IMR-90 (cell line): ENCODE measurements at regions of chr9 and their contacts with region 1.

Region 1: GRCh38 chr9:22469928-22470544 is 23.4 kb downstream of the DMRTA1 start:
- DNase-seq: peak; percentile 13
- ATAC-seq: peak; percentile 49; the same call in 1 of the 2 replicates
- H3K4me3 ChIP-seq: no peak overlapping the region
- H3K27ac ChIP-seq: no peak overlapping the region
- H3K4me1 ChIP-seq: no peaks in the 10 kb centered on the region
- H3K27me3 ChIP-seq: no peaks in the 10 kb centered on the region
- CTCF ChIP-seq: peak; percentile 63
- POLR2A ChIP-seq: no peak
- RAD21 ChIP-seq: peak; percentile 70

Region 2: DNA sequence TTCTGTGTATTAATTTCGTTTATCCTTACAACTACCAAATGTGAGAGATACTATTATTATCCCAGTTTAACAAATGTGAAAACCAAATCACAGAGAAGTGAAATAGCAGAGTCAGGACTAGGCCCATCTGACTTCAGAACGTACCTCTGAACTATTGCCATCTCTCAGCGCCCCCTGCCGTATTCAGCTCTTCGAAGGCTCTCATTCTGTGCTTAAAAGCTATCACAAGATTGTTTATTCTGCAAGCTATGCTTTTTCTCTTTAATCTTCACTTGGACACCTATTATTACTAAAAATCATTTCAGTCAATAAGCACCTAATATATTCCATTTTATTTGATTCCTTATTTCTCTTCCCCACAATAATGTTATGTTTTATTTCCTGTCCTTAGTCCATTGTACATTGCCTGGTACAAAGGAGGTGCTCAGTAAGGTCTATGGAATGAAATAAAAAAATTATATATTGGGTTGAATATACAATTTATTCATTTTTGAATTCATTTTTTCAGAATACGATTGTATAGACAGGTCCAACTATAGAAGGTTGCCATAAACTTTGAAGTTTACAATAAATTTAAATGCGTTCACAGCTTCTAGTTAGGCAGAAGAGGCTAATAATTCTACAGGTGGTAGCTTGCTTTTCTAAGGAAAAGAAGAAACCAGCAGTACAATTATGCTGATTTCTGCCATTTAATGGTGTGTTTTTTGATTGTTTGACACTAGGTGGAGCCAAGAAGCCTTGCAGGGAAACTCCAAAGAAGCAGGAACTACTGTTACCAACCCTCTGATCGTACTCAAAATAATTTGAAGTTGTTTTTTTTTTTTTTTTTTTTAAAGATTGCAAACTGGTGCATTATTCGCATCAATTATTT is 225.7 kb before region 1 on chr9:
- CTCF ChIA-PET with region 1: no interaction called
- POLR2A ChIA-PET with region 1: no interaction called
- dilution Hi-C with region 1: no loop called
- in situ Hi-C with region 1: no loop called
- intact Hi-C with region 1: no loop called
- DNase-seq: peak; percentile 63
- ATAC-seq: peak; percentile 92
- H3K4me3 ChIP-seq: no peak overlapping the region
- H3K27ac ChIP-seq: no peak overlapping the region
- H3K4me1 ChIP-seq: no peaks in the 10 kb centered on the region
- H3K27me3 ChIP-seq: peaks cover 3% of the 10 kb centered on the region
- CTCF ChIP-seq: peak; percentile 67
- POLR2A ChIP-seq: no peak
- RAD21 ChIP-seq: peak; percentile 67

Region 3: DNA sequence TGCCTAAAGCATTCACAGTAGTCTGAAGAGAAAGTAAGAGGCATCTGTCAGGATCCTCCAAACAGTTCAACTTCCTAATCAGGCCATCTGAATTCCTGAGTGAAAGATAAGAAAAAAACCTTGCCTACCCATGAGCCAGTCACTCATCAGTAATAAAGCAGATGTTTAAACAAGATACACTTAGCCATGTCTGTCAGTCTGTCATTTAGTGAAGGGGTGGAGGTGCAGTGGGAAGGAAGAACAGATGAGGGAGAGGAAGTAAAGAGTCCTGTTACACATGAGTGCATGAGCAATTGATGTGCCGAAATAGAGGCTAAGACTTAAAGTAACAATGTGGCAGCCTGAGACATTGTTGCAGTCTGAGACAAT is 53.4 kb before region 1 on chr9:
- CTCF ChIA-PET with region 1: no interaction called
- POLR2A ChIA-PET with region 1: no interaction called
- dilution Hi-C with region 1: no loop called
- in situ Hi-C with region 1: no loop called
- intact Hi-C with region 1: loop called (anchors 10 kb)
- DNase-seq: no peak
- ATAC-seq: no peak
- H3K4me3 ChIP-seq: no peak overlapping the region
- H3K27ac ChIP-seq: no peak overlapping the region
- H3K4me1 ChIP-seq: no peaks in the 10 kb centered on the region
- H3K27me3 ChIP-seq: no peaks in the 10 kb centered on the region
- CTCF ChIP-seq: no peak
- POLR2A ChIP-seq: no peak
- RAD21 ChIP-seq: no peak

Region 4: GRCh38 chr9:23438299-23438907 is 968.4 kb after region 1 on chr9:
- CTCF ChIA-PET with region 1: no interaction called
- POLR2A ChIA-PET with region 1: no interaction called
- dilution Hi-C with region 1: no loop called
- in situ Hi-C with region 1: no loop called
- intact Hi-C with region 1: loop called (anchors 10 kb)
- DNase-seq: no peak
- ATAC-seq: no peak
- H3K4me3 ChIP-seq: no peak overlapping the region
- H3K27ac ChIP-seq: no peak overlapping the region
- H3K4me1 ChIP-seq: no peaks in the 10 kb centered on the region
- H3K27me3 ChIP-seq: no peaks in the 10 kb centered on the region
- CTCF ChIP-seq: no peak
- POLR2A ChIP-seq: no peak
- RAD21 ChIP-seq: no peak